ENCODE measurements at regions of chr3 and their contacts with region 1.

Region 1: GRCh38 chr3:50587806-50588758 is 18.8 kb downstream of the HEMK1 start:
- DNase-seq: peak; percentile 32
- ATAC-seq: peak; percentile 72
- H3K4me3 ChIP-seq: no peak overlapping the region
- H3K27ac ChIP-seq: peak overlapping the region; percentile 51
- H3K4me1 ChIP-seq: peaks cover 35% of the 10 kb centered on the region
- H3K27me3 ChIP-seq: no peaks in the 10 kb centered on the region
- CTCF ChIP-seq: no peak
- EP300 ChIP-seq: no peak
- POLR2A ChIP-seq: peak; percentile 5
- RAD21 ChIP-seq: no peak

Region 2: GRCh38 chr3:50600841-50601591 is 12.9 kb after region 1 on chr3:
- CTCF ChIA-PET with region 1: interaction called, 42 read pairs
- POLR2A ChIA-PET with region 1: interaction called, 65 read pairs
- RAD21 ChIA-PET with region 1: interaction called, 32 read pairs
- SMC1A ChIA-PET with region 1: interaction called, 15 read pairs
- in situ Hi-C with region 1: no loop called
- intact Hi-C with region 1: no loop called
- DNase-seq: no peak
- ATAC-seq: peak; percentile 92
- H3K4me3 ChIP-seq: no peak overlapping the region
- H3K27ac ChIP-seq: peak overlapping the region; percentile 37
- H3K4me1 ChIP-seq: peaks cover 21% of the 10 kb centered on the region
- H3K27me3 ChIP-seq: no peaks in the 10 kb centered on the region
- CTCF ChIP-seq: no peak
- EP300 ChIP-seq: no peak
- POLR2A ChIP-seq: no peak
- RAD21 ChIP-seq: no peak